CD4-positive, alpha-beta memory T cell (primary cell): ENCODE measurements at regions of chr2 and their contacts with region 1.

Region 1: DNA sequence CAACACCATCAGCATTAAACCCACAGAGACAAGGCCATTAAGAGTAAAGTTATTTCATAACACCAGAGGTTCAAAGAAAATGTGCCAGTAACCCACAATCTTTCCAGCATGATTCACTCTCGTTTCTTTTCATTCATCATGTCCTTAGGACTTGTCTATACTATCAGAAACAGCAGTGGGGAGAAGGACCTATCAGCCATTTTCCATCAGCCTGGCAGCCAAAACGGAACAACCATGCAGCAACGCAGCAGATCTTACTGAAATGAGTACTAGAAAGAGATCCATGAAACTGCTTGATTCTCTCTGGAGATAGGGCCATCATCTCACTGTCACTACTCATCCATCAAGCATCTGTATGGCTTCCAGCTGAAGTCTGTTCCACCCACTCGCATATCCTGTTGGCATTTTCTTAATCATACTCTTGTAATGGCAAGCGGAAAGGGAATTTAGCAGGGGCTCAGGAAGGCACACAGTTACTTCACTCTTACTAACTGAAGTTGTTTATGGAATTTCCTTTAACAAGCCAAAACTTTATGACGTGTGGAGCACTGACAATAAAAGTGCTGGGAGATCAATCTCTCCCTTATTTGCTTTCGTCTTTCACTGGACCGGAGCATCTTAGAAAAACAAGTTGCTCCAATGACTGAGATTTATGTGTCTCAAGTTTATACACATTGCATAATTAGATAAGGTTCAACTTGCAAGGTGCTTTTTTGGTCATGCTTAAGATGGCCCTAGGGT is 69.7 kb downstream of the EPHA4 start:
- DNase-seq: no peak
- H3K4me3 ChIP-seq: no peak overlapping the region
- H3K4me3 Mint-ChIP-seq: peak overlapping the region in 1 of 8 donors; percentile 37
- H3K27ac ChIP-seq: no peak overlapping the region
- H3K27ac Mint-ChIP-seq: peak overlapping the region in 5 of 7 donors; percentile 1 to 39 (median 13)
- H3K4me1 ChIP-seq: peaks cover 22% of the 10 kb centered on the region
- H3K4me1 Mint-ChIP-seq: peaks cover 28 to 59% (median 45%) of the 10 kb centered on the region in 4 donors
- H3K27me3 ChIP-seq: no peaks in the 10 kb centered on the region
- H3K27me3 Mint-ChIP-seq: no peaks in the 10 kb centered on the region

Region 2: DNA sequence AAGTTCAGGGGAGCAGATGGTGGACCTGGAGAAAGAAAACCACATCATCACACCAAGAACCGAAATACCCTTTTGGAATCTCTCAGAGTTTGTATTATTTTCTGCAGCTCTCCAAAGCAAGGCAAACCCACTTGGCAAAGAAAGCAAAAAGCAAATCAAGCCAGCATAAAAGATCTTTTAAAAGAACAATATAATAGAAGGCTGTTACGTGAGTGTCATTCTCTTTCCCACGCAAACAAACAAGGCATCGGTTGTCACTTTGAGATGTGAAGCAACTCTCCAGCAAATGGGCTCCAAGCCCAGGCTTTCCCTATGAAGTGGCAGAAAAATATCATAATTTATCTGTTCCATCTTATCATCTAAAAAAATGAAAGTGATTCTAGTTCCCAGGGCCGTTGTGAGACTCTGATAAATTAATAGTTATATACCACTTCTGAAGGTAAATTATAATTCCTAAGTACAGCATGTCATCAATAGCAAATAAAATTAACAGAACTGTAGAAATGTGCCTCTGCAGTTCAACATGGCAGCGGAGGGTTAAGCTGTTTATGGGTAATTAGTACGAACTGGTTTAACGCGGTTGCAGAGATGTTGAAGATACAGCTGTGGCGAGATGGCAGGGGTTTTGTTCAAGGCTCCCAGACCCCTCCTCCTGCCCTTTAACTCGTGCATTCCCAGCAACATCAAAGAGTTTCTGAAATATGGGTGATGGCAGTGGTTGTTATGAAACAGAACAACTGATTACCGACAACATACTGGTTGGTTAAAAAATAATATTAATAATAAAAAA is 19.6 kb before region 1 on chr2:
- CTCF ChIA-PET with region 1: interaction called, 11 read pairs
- POLR2A ChIA-PET with region 1: no interaction called
- intact Hi-C with region 1: no loop called
- DNase-seq: no peak
- H3K4me3 ChIP-seq: no peak overlapping the region
- H3K4me3 Mint-ChIP-seq: no peak overlapping the region
- H3K27ac ChIP-seq: no peak overlapping the region
- H3K27ac Mint-ChIP-seq: peak overlapping the region in 1 of 7 donors; percentile 51
- H3K4me1 ChIP-seq: no peaks in the 10 kb centered on the region
- H3K4me1 Mint-ChIP-seq: peaks cover 8 to 10% (median 9%) of the 10 kb centered on the region in 4 donors
- H3K27me3 ChIP-seq: no peaks in the 10 kb centered on the region
- H3K27me3 Mint-ChIP-seq: no peaks in the 10 kb centered on the region

Region 3: DNA sequence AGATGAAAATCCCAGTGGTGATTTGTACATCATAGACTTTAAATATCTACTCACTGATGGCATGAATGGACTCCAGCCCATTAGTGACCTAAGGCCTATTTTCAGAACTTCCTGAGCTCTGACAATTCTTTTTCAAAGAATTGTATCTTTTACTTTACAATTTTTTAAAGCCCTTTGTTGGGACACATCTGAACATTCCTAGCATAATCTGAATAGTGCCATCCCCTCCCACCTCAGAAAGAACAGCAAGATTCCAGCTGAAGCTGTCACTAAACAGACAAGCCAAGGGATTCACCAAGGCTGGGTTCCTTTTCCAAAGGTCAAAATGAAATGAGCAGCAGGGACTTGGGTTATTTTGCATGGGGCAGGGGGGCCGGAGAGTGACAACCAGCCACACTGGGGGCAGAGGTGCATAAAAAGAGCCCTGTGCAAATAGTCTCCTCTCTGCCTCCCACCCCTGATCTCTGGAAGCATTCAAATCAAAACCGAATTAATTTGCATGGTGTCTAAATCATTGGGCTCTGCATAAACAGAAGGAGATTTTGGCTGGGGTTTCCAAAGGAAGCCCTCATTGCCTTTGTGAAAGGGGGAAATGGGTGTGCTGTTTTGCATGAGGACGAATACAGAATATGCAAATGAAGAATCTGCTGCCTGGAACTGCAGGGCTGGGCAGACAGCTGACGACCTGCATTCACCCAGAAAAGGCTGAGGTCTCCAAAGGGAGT is 52.5 kb after region 1 on chr2:
- CTCF ChIA-PET with region 1: interaction called, 11 read pairs
- POLR2A ChIA-PET with region 1: no interaction called
- intact Hi-C with region 1: no loop called
- DNase-seq: peak in 1 of 5 donors; percentile 15
- H3K4me3 ChIP-seq: no peak overlapping the region
- H3K4me3 Mint-ChIP-seq: peak overlapping the region in 7 of 8 donors; percentile 71 to 85 (median 80)
- H3K27ac ChIP-seq: no peak overlapping the region
- H3K27ac Mint-ChIP-seq: peak overlapping the region; percentile 63 to 88 (median 77)
- H3K4me1 ChIP-seq: peaks cover 39% of the 10 kb centered on the region
- H3K4me1 Mint-ChIP-seq: peaks cover 53 to 77% (median 64%) of the 10 kb centered on the region in 4 donors
- H3K27me3 ChIP-seq: no peaks in the 10 kb centered on the region
- H3K27me3 Mint-ChIP-seq: no peaks in the 10 kb centered on the region